Caco-2 (cell line): ENCODE measurements at regions of chr16 and their contacts with region 1.

Region 1: DNA sequence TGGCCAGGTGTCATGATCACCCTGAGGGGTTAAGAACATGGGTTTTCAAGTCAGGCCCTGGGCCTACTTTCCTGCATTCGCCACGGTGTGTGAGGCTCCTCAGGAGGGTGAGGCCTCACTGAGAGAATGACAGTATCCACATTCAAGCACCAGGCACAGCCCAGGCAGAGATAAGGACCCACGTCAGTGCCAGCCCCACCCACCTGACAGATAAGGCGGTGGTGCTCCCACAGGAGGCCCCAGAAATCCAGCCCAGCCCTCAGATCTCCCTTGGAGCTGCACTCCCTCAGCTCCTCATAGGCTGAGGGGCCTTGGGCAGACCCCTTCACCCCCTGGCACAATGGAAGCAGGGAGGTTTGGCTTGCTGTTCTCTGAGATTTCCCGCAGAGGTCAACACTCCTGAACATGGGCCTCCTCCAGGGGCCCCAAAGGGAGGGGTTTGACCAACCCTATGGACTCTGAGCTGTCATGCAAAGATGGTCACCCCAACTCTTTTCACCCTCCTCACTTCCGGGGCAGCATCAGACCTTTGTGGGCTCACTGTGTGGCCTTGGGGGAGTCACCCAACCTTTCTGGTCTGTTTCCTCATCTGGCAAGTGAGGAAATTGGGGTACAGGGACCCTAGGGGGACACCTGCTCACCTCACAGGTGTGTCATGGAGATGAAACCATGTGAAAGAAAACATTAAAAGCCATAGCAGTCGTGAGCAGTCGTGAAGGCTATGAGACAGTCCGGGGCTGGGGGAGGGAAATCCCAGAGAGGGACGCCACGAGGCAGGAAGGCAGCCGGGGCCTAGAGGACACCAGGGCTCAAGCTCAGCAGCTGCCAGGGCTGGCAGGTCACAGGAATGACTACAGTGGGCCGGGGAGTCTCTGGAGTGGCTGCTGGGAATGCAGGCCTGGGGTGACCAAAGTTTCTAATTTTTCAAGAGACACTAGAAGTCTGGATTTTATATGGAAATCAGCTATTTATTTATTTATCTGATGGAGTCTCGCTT is 15.4 kb downstream of the PLLP start:
- DNase-seq: peak; percentile 79 to 90
- H3K4me3 ChIP-seq: no peak overlapping the region
- H3K4me3 Mint-ChIP-seq: no peak overlapping the region
- H3K27ac Mint-ChIP-seq: peak overlapping the region; percentile 21
- H3K4me1 ChIP-seq: peaks cover 24% of the 10 kb centered on the region
- H3K4me1 Mint-ChIP-seq: peaks cover 7% of the 10 kb centered on the region
- H3K27me3 ChIP-seq: no peaks in the 10 kb centered on the region
- H3K27me3 Mint-ChIP-seq: no peaks in the 10 kb centered on the region
- CTCF ChIP-seq: no peak

Region 2: GRCh38 chr16:57226701-57227621 is 42.1 kb before region 1 on chr16:
- CTCF ChIA-PET with region 1: no interaction called
- POLR2A ChIA-PET with region 1: no interaction called
- intact Hi-C with region 1: no loop called
- DNase-seq: no peak
- H3K4me3 ChIP-seq: no peak overlapping the region
- H3K4me3 Mint-ChIP-seq: no peak overlapping the region
- H3K27ac Mint-ChIP-seq: no peak overlapping the region
- H3K4me1 ChIP-seq: no peaks in the 10 kb centered on the region
- H3K4me1 Mint-ChIP-seq: no peaks in the 10 kb centered on the region
- H3K27me3 ChIP-seq: no peaks in the 10 kb centered on the region
- H3K27me3 Mint-ChIP-seq: no peaks in the 10 kb centered on the region
- CTCF ChIP-seq: no peak

Region 3: GRCh38 chr16:57284208-57284951 is 15.3 kb after region 1 on chr16 and contains the start of gene PLLP:
- CTCF ChIA-PET with region 1: interaction called, 3 read pairs
- POLR2A ChIA-PET with region 1: interaction called, 6 read pairs
- intact Hi-C with region 1: loop called (anchors 2 kb)
- DNase-seq: peak; percentile 77 to 89
- H3K4me3 ChIP-seq: peak within 1 kb of the TSS; percentile 99
- H3K4me3 Mint-ChIP-seq: peak within 1 kb of the TSS; percentile 80
- H3K27ac Mint-ChIP-seq: peak within 1 kb of the TSS; percentile 82
- H3K4me1 ChIP-seq: peaks cover 28% of the 10 kb centered on the region
- H3K4me1 Mint-ChIP-seq: peaks cover 31% of the 10 kb centered on the region
- H3K27me3 ChIP-seq: no peaks in the 10 kb centered on the region
- H3K27me3 Mint-ChIP-seq: no peaks in the 10 kb centered on the region
- CTCF ChIP-seq: no peak
- total RNA-seq, gene PLLP: 53.0 and 54.0 TPM in 2 replicates